ENCODE measurements at regions of chr1 and their contacts with region 1.

Region 1: DNA sequence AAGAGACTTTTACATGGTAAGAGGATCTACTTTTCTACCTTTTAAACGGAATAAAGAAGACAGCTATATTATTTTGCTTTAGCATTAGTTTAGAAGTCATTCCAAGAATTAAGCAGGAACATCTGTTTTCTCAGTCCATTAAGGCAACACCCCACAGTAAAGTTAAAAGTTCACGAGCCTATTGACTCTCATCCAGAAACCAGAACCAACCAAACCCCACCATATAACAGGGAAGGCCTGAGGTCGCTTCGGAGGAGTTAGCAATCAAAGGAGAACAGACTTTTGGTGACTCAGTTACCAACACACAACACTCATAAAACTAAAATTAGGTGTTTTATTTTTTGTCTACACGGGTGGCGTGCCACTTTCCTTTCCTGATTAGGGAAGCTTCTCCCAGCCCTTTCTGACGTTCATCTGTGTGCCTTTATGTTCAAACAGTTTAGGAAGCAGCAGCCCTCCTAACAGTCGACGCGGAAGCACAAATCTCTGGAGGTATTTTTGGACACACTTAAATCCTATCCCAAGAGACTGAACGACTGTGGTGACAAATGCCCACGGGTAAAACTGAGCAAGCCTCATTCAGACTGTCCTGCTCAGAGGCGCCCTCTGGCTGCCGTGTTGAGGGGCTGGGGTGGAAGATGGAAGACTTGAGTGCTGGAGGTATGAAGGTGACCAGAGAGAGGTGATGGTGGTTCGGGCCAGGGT is 8.6 kb upstream of the PLA2G2C start:
- DNase-seq: peak; percentile 73 to 89 (median 88)
- ATAC-seq: peak; percentile 72 to 79
- H3K4me3 ChIP-seq: no peak overlapping the region
- H3K27ac ChIP-seq: no peak overlapping the region
- H3K4me1 ChIP-seq: peaks cover 8% of the 10 kb centered on the region
- H3K27me3 ChIP-seq: no peaks in the 10 kb centered on the region

Region 2: GRCh38 chr1:19661721-19662228 is 533.1 kb before region 1 on chr1:
- intact Hi-C with region 1: no loop called
- DNase-seq: peak in 1 of 3 donors; percentile 53
- ATAC-seq: no peak
- H3K4me3 ChIP-seq: no peak overlapping the region
- H3K27ac ChIP-seq: no peak overlapping the region
- H3K4me1 ChIP-seq: peaks cover 2% of the 10 kb centered on the region
- H3K27me3 ChIP-seq: no peaks in the 10 kb centered on the region

Region 3: GRCh38 chr1:20100632-20101355 is 94.1 kb before region 1 on chr1:
- intact Hi-C with region 1: loop called in 1 of 4 experiments (anchors 5 kb)
- DNase-seq: peak in 2 of 3 donors; percentile 71 to 78
- ATAC-seq: peak; percentile 77 to 82
- H3K4me3 ChIP-seq: no peak overlapping the region
- H3K27ac ChIP-seq: no peak overlapping the region
- H3K4me1 ChIP-seq: no peaks in the 10 kb centered on the region
- H3K27me3 ChIP-seq: no peaks in the 10 kb centered on the region